Right ventricle myocardium inferior (tissue), 1 donor: ENCODE measurements at regions of chr7 and their contacts with region 1.

Region 1: DNA sequence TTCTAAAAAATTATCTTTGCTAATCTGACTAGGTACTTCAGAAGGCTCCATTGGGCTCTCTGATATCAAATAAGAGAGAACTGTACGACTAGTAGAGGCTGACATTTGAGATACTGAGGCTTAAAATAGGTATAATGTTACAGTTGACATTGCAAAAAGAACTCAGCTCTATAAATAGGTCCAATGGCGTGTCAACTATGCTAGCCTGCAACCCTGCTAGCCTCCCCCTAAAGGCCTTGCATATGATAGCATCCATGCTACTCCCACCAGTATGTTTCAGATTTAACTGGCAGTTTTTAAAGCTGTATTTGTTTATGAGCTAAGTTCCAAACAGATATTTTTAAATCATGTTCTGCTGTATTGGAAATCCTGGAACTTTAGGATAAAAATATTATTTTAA is at the start of gene PPP1R3A:
- DNase-seq: no peak
- ATAC-seq: peak; percentile 93
- total RNA-seq, gene PPP1R3A: 121 TPM

Region 2: DNA sequence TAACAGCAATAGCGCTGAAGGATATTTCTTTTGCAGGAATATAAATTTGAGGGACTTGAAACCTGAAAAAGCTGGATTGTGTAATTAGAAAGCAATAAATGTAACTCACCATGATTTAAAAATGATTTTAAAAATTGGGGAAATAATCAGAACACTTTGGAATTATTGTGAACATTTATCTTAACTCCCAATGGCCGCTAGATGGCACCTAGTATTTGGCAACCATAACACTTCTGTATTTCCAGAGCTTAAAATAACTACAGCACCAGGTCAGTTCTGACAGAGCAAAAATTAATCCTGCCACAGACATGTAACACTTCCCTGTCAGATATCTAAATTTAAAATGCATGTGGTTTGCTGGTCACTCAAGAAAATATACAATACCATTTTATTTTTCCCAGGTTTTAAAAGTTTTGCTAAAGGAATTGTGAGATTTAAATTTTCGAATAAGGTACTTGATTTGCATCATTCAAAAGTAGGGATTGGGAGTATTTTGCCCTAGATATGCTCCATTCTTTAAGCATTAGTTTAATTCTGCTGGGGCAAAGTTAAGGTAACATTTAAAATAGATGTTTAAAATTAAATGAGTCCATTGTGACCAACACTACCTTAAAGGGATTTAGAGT is 144.7 kb before region 1 on chr7:
- intact Hi-C with region 1: loop called (anchors 5 kb)
- DNase-seq: no peak
- ATAC-seq: peak; percentile 72

Region 3: DNA sequence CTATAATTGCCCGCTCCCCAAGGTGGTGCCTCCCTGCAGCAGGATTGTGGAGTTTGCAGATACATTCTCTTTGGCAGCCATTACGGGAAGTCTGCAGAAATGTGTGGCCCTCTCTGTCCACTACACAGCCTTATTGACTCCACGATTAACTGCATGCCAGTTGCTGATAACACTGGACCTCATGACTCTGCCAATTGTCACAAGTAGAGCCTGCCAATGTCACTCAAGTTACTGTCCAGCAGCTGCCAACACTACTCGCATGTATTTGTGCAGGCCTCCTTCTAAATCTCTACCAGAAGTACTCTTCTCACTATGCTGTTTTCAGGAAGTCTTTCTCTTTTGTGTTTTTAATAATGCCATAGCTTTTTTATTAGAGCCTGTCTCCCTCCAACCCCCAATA is 128.9 kb before region 1 on chr7:
- intact Hi-C with region 1: loop called (anchors 1 kb)
- DNase-seq: no peak
- ATAC-seq: peak; percentile 97

Region 4: GRCh38 chr7:113805976-113806375 is 113.0 kb before region 1 on chr7:
- intact Hi-C with region 1: no loop called
- DNase-seq: no peak
- ATAC-seq: no peak

Region 5: GRCh38 chr7:113824117-113824823 is 94.7 kb before region 1 on chr7:
- intact Hi-C with region 1: loop called (anchors 10 kb)
- DNase-seq: no peak
- ATAC-seq: peak; percentile 44

Region 6: GRCh38 chr7:113998934-113999333 is 80.0 kb after region 1 on chr7:
- intact Hi-C with region 1: no loop called
- DNase-seq: no peak
- ATAC-seq: no peak